ENCODE measurements at regions of chr14 and their contacts with region 1.

Region 1: DNA sequence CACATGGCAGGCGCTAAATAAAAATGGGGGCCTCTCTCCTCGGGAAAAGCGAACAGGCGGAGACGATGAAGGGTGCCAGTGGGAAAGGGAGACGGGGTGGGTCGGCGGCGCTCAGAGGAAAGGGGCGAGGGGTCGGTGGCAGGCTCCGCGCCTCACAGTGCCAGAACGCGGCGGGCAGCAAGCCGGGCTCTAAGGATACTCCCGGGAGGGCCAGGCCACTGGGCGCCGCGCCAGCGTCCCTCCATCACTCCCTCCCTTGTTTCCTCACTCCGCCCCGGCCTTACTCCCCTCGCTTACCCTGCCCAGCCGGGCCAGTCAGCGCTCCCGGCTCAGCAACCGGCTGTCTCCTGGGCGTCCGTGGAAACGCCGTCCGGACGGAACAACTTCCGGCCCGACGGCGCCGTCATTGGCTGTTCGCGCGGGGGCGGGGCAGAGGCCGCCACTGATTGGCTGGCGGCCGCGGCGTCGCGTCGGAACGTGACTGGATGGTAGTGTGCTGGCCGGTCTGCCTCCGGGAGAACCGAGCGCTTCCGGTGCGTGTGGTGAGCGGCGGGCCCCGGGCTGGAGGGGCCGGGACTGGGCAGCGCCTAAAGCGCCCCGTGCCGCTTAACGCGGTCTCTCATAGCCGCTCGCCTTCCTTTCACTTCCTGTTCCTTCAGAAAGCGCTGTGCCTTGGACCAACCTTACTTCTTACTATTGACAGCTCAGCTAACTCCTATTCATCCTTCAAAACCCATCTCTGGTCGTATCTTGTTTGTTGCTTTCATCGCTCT is 53.0 kb downstream of the SLC25A47 start:
- DNase-seq: peak; percentile 95
- H3K4me3 ChIP-seq: peak within 1 kb of the TSS; percentile 70 to 93
- H3K27ac ChIP-seq: peak within 1 kb of the TSS; percentile 87 to 98
- H3K4me1 ChIP-seq: peaks cover 0 to 20% of the 10 kb centered on the region in 2 experiments; a peak in 1 of 4 replicates
- H3K27me3 ChIP-seq: no peaks in the 10 kb centered on the region
- CTCF ChIP-seq: no peak
- EP300 ChIP-seq: no peak; a peak in 1 of 4 replicates
- RAD21 ChIP-seq: no peak

Region 2: GRCh38 chr14:100271247-100271939 is 104.8 kb before region 1 on chr14:
- CTCF ChIA-PET with region 1: interaction called, 22 read pairs
- POLR2A ChIA-PET with region 1: no interaction called
- DNase-seq: no peak
- H3K4me3 ChIP-seq: no peak overlapping the region
- H3K27ac ChIP-seq: no peak overlapping the region
- H3K4me1 ChIP-seq: no peaks in the 10 kb centered on the region
- H3K27me3 ChIP-seq: no peaks in the 10 kb centered on the region
- CTCF ChIP-seq: peak; percentile 49
- EP300 ChIP-seq: no peak
- RAD21 ChIP-seq: peak; percentile 57

Region 3: GRCh38 chr14:100306420-100307219 is 69.5 kb before region 1 on chr14 and contains the start of gene SLC25A29:
- CTCF ChIA-PET with region 1: interaction called, 29 read pairs
- POLR2A ChIA-PET with region 1: interaction called, 6 read pairs
- DNase-seq: peak; percentile 99
- H3K4me3 ChIP-seq: peak within 1 kb of the TSS; percentile 87 to 90
- H3K27ac ChIP-seq: peak within 1 kb of the TSS; percentile 51 to 81
- H3K4me1 ChIP-seq: peaks cover 0 to 28% of the 10 kb centered on the region in 2 experiments; a peak in 2 of 4 replicates
- H3K27me3 ChIP-seq: no peaks in the 10 kb centered on the region
- CTCF ChIP-seq: no peak
- EP300 ChIP-seq: no peak; a peak in 1 of 4 replicates
- RAD21 ChIP-seq: no peak
- polyA plus RNA-seq, gene SLC25A29: 66.9 and 84.6 TPM in 2 replicates

Region 4: GRCh38 chr14:100362311-100362927 is 13.7 kb before region 1 on chr14:
- CTCF ChIA-PET with region 1: interaction called, 10 read pairs
- POLR2A ChIA-PET with region 1: interaction called, 5 read pairs
- DNase-seq: no peak
- H3K4me3 ChIP-seq: no peak overlapping the region
- H3K27ac ChIP-seq: peak overlapping the region in 1 of 2 experiments; percentile 69; a peak in 2 of 4 replicates
- H3K4me1 ChIP-seq: peaks cover 0 to 3% of the 10 kb centered on the region in 2 experiments; a peak in 2 of 4 replicates
- H3K27me3 ChIP-seq: no peaks in the 10 kb centered on the region
- CTCF ChIP-seq: no peak
- EP300 ChIP-seq: peak in 1 of 2 experiments; percentile 33; a peak in 1 of 4 replicates
- RAD21 ChIP-seq: no peak

Region 5: GRCh38 chr14:100397013-100397412 is 20.9 kb after region 1 on chr14:
- CTCF ChIA-PET with region 1: no interaction called
- POLR2A ChIA-PET with region 1: no interaction called
- DNase-seq: no peak
- H3K4me3 ChIP-seq: no peak overlapping the region
- H3K27ac ChIP-seq: peak overlapping the region in 1 of 2 experiments; percentile 78; a peak in 2 of 4 replicates
- H3K4me1 ChIP-seq: peaks cover 12 to 78% of the 10 kb centered on the region in 2 experiments; a peak in 3 of 4 replicates
- H3K27me3 ChIP-seq: no peaks in the 10 kb centered on the region
- CTCF ChIP-seq: no peak
- EP300 ChIP-seq: no peak
- RAD21 ChIP-seq: no peak